IMR-90 (cell line): ENCODE measurements at regions of chr2 and their contacts with region 1.

Region 1: DNA sequence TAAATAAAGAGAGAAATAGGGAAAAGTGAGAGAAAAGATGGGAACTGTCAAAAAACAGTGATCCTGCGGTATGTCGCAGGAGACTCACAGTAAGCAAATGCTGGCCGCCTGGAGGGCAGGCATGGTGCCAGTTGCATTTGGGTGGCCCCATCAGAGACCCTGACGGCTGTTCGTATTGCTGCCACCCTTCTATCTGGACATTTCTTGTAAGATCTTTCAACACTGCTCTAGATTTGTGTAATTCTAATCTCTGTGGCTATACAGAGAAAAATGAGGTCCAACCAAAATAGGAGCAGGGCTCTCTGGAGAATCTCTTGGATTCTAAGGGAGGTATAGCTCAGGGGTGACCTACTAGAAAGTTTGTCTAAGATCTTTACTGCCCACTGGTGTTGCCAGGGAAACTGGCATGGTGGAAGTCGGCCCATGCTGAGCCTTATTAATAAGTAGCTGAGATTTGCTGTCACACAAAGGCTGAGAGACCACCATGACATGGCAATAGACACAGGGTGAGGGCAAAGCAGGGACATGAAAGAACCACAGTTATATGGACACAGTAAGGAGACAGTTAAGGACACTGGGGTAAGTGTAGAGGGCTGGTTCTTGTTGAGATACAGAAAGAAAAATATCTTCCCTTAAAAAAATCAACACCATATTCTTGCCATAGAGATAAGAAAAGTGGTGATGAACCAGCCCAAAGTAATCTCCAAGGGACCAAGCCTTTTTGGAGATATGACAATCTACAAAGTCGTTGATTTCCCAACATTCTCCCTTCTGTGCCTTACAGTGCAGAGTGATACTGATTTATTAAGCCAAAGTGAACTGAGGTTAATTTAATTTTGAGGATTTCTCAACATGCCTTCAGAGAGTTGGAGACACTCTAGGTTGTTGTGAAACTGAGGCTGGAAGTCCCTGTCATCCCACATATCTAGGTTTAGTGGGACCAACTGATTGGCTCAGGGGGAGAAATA is 26.4 kb upstream of the FZD7 start:
- DNase-seq: no peak
- ATAC-seq: no peak
- H3K4me3 ChIP-seq: no peak overlapping the region
- H3K27ac ChIP-seq: no peak overlapping the region
- H3K4me1 ChIP-seq: peaks cover 10% of the 10 kb centered on the region
- H3K27me3 ChIP-seq: no peaks in the 10 kb centered on the region
- CTCF ChIP-seq: peak; percentile 35
- POLR2A ChIP-seq: no peak
- RAD21 ChIP-seq: peak; percentile 25

Region 2: GRCh38 chr2:201768918-201769317 is 238.4 kb before region 1 on chr2:
- CTCF ChIA-PET with region 1: no interaction called
- POLR2A ChIA-PET with region 1: interaction called, 13 read pairs
- dilution Hi-C with region 1: no loop called
- in situ Hi-C with region 1: no loop called
- intact Hi-C with region 1: no loop called
- DNase-seq: peak; percentile 62
- ATAC-seq: peak; percentile 88
- H3K4me3 ChIP-seq: no peak overlapping the region
- H3K27ac ChIP-seq: no peak overlapping the region
- H3K4me1 ChIP-seq: peaks cover 5% of the 10 kb centered on the region; the same call in 1 of the 2 replicates
- H3K27me3 ChIP-seq: no peaks in the 10 kb centered on the region
- CTCF ChIP-seq: no peak
- POLR2A ChIP-seq: no peak
- RAD21 ChIP-seq: no peak

Region 3: GRCh38 chr2:201996006-201996405 is 11.3 kb before region 1 on chr2:
- CTCF ChIA-PET with region 1: no interaction called
- POLR2A ChIA-PET with region 1: no interaction called
- dilution Hi-C with region 1: no loop called
- in situ Hi-C with region 1: no loop called
- intact Hi-C with region 1: no loop called
- DNase-seq: no peak
- ATAC-seq: no peak
- H3K4me3 ChIP-seq: no peak overlapping the region
- H3K27ac ChIP-seq: no peak overlapping the region
- H3K4me1 ChIP-seq: peaks cover 6% of the 10 kb centered on the region
- H3K27me3 ChIP-seq: no peaks in the 10 kb centered on the region
- CTCF ChIP-seq: no peak
- POLR2A ChIP-seq: no peak
- RAD21 ChIP-seq: no peak

Region 4: DNA sequence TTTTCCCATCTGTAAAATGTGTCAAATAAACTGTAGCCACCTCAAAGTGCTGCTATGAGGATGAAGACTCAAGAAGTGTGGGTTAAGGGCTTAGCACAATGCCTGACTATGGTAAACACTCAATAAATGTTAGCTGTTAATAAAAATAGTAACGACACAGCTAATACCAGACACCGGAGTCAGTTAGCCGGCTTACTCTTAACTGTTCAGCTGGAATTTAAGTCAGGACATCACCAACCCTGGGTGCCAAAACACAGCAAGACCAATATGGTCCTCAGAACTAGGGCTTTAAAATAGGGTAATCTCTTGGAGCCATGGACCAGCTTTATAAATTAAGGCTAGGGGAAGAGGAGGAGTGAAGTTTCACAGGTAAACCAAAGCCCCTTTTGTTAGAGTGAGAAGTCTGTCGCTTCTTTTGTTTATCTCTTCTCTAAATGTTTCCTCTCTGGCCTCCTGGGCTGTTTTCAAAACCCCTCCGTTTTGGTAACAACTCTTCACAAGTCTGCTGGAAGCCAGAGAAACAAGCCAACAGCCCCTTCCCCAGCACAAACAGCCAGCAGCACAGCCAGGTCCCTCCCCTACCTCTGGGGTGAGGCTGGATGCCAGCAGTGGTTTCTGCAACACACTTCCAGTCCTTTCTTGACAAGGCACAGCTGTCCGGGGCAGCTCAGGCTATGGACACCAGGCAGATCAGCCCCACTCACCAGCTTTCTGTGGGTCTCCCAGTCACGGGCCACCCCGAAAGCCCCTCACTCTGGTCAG is 12.6 kb after region 1 on chr2:
- CTCF ChIA-PET with region 1: no interaction called
- POLR2A ChIA-PET with region 1: interaction called, 11 read pairs
- dilution Hi-C with region 1: no loop called
- in situ Hi-C with region 1: no loop called
- intact Hi-C with region 1: no loop called
- DNase-seq: peak; percentile 44
- ATAC-seq: peak; percentile 61
- H3K4me3 ChIP-seq: no peak overlapping the region
- H3K27ac ChIP-seq: peak overlapping the region; percentile 7; the same call in 1 of the 2 replicates
- H3K4me1 ChIP-seq: peaks cover 13% of the 10 kb centered on the region
- H3K27me3 ChIP-seq: no peaks in the 10 kb centered on the region
- CTCF ChIP-seq: no peak
- POLR2A ChIP-seq: no peak
- RAD21 ChIP-seq: no peak